GM12878 (cell line): ENCODE measurements at regions of chr11 and their contacts with region 1.

Region 1: GRCh38 chr11:73295231-73295995 is 12.7 kb upstream of the ARHGEF17 start:
- DNase-seq: peak; percentile 31
- ATAC-seq: peak; percentile 92
- H3K4me3 ChIP-seq: no peak overlapping the region
- H3K27ac ChIP-seq: no peak overlapping the region
- H3K4me1 ChIP-seq: no peaks in the 10 kb centered on the region
- H3K27me3 ChIP-seq: no peaks in the 10 kb centered on the region; a peak in 2 of 4 replicates
- CTCF ChIP-seq: peak; percentile 92 to 99 (median 98)
- EP300 ChIP-seq: no peak
- POLR2A ChIP-seq: no peak
- RAD21 ChIP-seq: peak; percentile 79

Region 2: DNA sequence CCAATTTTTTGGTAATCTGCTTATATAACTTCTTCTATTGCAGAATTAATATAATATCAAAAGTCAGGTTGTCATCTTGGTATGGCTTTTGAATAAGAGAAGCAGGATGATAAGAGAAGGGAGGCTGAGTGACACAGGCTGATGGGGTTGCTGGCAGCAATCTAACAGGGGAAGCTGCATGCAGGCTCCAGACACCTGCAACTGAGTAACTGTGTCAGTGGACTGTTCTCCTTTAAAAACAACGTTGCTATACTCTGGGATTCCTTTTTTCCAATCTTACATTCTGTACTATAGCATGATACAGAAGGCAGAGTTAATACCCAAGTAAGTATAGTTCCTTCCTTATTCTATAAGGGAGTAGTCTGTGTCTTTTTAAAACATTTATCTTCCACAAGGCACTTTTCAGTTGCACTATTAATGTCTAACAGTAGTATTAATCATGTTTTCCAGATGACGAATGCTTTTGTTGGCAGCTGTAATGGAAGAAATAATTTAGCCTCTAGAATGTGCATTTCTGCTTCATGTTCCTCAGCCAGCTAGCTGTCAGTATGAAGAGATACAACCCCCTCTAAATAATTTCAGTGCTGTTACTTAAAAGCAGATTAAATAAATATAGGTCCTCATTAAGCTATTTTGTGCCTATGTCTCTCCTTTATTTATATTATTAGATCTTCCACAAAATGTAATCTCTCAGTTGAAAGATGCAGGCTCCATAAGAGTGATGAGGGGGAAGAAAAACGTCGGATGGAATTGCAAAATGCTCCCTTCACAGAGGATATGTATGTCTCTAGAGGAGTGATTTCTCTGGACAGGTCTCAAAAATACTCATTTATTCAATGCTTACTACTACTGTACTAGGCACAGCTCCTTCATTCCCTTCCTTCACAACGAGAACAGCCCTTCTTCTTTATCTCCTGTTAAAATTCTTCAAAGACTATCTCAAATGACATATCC is 430.4 kb before region 1 on chr11:
- CTCF ChIA-PET with region 1: no interaction called
- POLR2A ChIA-PET with region 1: no interaction called
- RAD21 ChIA-PET with region 1: no interaction called
- SMC1A ChIA-PET with region 1: no interaction called
- in situ Hi-C with region 1: no loop called
- intact Hi-C with region 1: no loop called
- DNase-seq: no peak
- ATAC-seq: no peak
- H3K4me3 ChIP-seq: no peak overlapping the region
- H3K27ac ChIP-seq: no peak overlapping the region
- H3K4me1 ChIP-seq: no peaks in the 10 kb centered on the region
- H3K27me3 ChIP-seq: no peaks in the 10 kb centered on the region
- CTCF ChIP-seq: no peak
- EP300 ChIP-seq: no peak
- POLR2A ChIP-seq: no peak
- RAD21 ChIP-seq: no peak

Region 3: GRCh38 chr11:73218106-73218829 is 77.1 kb before region 1 on chr11 and contains the start of gene P2RY2:
- CTCF ChIA-PET with region 1: no interaction called
- POLR2A ChIA-PET with region 1: no interaction called
- RAD21 ChIA-PET with region 1: no interaction called
- SMC1A ChIA-PET with region 1: no interaction called
- in situ Hi-C with region 1: no loop called
- intact Hi-C with region 1: no loop called
- DNase-seq: no peak
- ATAC-seq: peak; percentile 77
- H3K4me3 ChIP-seq: peak within 1 kb of the TSS; percentile 46; the same call in 1 of the 2 replicates
- H3K27ac ChIP-seq: no peak within 1 kb of the TSS
- H3K4me1 ChIP-seq: peaks cover 12% of the 10 kb centered on the region
- H3K27me3 ChIP-seq: no peaks in the 10 kb centered on the region; a peak in 1 of 4 replicates
- CTCF ChIP-seq: peak; percentile 19 to 48 (median 34); a peak in 4 of 6 replicates
- EP300 ChIP-seq: no peak
- POLR2A ChIP-seq: no peak
- RAD21 ChIP-seq: no peak
- polyA plus RNA-seq, gene P2RY2: not detected

Region 4: GRCh38 chr11:73314117-73314961 is 18.9 kb after region 1 on chr11:
- CTCF ChIA-PET with region 1: interaction called, 10 read pairs
- POLR2A ChIA-PET with region 1: no interaction called
- RAD21 ChIA-PET with region 1: interaction called, 3 read pairs
- SMC1A ChIA-PET with region 1: interaction called, 8 read pairs
- in situ Hi-C with region 1: no loop called
- intact Hi-C with region 1: no loop called
- DNase-seq: no peak
- ATAC-seq: peak; percentile 73
- H3K4me3 ChIP-seq: peak overlapping the region; percentile 16
- H3K27ac ChIP-seq: peak overlapping the region; percentile 63
- H3K4me1 ChIP-seq: peaks cover 14% of the 10 kb centered on the region
- H3K27me3 ChIP-seq: no peaks in the 10 kb centered on the region
- CTCF ChIP-seq: no peak
- EP300 ChIP-seq: no peak
- POLR2A ChIP-seq: no peak
- RAD21 ChIP-seq: no peak

Region 5: DNA sequence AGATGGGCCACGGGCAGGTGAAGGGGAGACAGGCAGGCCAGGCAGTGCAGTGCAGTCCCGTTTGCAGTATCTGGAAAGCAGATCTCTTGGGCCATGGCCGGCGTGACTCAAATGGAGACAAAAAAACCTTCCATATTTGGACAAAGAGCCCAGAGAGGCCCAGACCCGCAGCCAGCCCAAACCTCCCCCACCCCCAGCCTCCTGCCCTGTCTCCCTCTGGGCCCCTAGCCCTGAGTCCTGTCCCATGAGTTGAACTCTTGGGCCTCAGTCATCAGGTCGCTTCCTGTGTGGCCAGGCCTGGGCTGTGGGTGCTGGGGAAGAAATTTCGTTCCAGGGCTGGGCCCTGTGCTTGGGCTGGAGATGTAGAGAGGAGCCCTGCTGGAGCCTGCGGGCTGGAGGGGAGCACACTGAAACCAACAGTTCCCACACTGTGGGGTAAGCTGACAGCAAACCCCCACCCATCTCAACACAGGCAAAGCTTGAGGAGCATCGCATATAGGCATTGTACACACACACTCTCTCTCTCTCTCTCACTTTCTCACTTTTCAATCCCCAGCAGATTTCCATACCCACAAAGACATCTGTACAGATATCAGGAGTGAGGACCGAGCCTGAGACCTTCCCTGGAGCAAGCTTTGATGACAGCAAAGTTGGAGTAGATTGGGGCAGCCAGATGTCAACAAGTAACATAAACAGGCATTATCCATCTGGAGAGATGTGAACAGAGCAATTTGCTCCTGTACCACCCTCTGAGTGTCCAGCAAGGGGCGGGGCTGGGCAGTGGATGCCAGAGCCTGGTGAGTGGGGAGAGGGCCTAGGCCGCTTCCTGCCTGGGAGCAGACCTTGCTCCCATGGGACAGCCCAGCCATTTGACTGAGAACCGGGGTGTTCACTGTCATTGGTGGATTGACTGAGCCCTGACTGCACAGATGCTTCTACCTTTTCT is 29.9 kb after region 1 on chr11:
- CTCF ChIA-PET with region 1: interaction called, 19 read pairs
- POLR2A ChIA-PET with region 1: no interaction called
- RAD21 ChIA-PET with region 1: interaction called, 10 read pairs
- SMC1A ChIA-PET with region 1: interaction called, 7 read pairs
- in situ Hi-C with region 1: no loop called
- intact Hi-C with region 1: no loop called
- DNase-seq: peak; percentile 83
- ATAC-seq: peak; percentile 83
- H3K4me3 ChIP-seq: peak overlapping the region; percentile 38; the same call in 1 of the 2 replicates
- H3K27ac ChIP-seq: peak overlapping the region; percentile 99
- H3K4me1 ChIP-seq: peaks cover 80% of the 10 kb centered on the region
- H3K27me3 ChIP-seq: no peaks in the 10 kb centered on the region
- CTCF ChIP-seq: no peak
- EP300 ChIP-seq: no peak; a peak in 2 of 4 replicates
- POLR2A ChIP-seq: peak; percentile 70
- RAD21 ChIP-seq: no peak

Region 6: GRCh38 chr11:73404048-73404447 is 108.6 kb after region 1 on chr11:
- CTCF ChIA-PET with region 1: no interaction called
- POLR2A ChIA-PET with region 1: no interaction called
- RAD21 ChIA-PET with region 1: no interaction called
- SMC1A ChIA-PET with region 1: no interaction called
- in situ Hi-C with region 1: no loop called
- intact Hi-C with region 1: no loop called
- DNase-seq: no peak
- ATAC-seq: no peak
- H3K4me3 ChIP-seq: no peak overlapping the region
- H3K27ac ChIP-seq: no peak overlapping the region
- H3K4me1 ChIP-seq: no peaks in the 10 kb centered on the region
- H3K27me3 ChIP-seq: no peaks in the 10 kb centered on the region
- CTCF ChIP-seq: peak in 2 of 3 experiments; percentile 13 to 31; a peak in 3 of 6 replicates
- EP300 ChIP-seq: no peak
- POLR2A ChIP-seq: no peak
- RAD21 ChIP-seq: peak; percentile 47

Region 7: GRCh38 chr11:73445980-73446379 is 150.6 kb after region 1 on chr11:
- CTCF ChIA-PET with region 1: no interaction called
- POLR2A ChIA-PET with region 1: no interaction called
- RAD21 ChIA-PET with region 1: no interaction called
- SMC1A ChIA-PET with region 1: no interaction called
- in situ Hi-C with region 1: no loop called
- intact Hi-C with region 1: no loop called
- DNase-seq: no peak
- ATAC-seq: no peak
- H3K4me3 ChIP-seq: no peak overlapping the region
- H3K27ac ChIP-seq: no peak overlapping the region
- H3K4me1 ChIP-seq: no peaks in the 10 kb centered on the region
- H3K27me3 ChIP-seq: no peaks in the 10 kb centered on the region
- CTCF ChIP-seq: no peak
- EP300 ChIP-seq: no peak
- POLR2A ChIP-seq: no peak
- RAD21 ChIP-seq: no peak